GM13976 (cell line): ENCODE measurements at regions of chr20 and their contacts with region 1.

Region 1: GRCh38 chr20:48904365-48905296 is 16.9 kb upstream of the ARFGEF2 start:
- DNase-seq: peak; percentile 72
- CTCF ChIP-seq: peak; percentile 60

Region 2: GRCh38 chr20:48657475-48658470 is 246.9 kb before region 1 on chr20:
- in situ Hi-C with region 1: loop called (anchors 5 kb)
- DNase-seq: peak; percentile 94
- CTCF ChIP-seq: peak; percentile 88

Region 3: DNA sequence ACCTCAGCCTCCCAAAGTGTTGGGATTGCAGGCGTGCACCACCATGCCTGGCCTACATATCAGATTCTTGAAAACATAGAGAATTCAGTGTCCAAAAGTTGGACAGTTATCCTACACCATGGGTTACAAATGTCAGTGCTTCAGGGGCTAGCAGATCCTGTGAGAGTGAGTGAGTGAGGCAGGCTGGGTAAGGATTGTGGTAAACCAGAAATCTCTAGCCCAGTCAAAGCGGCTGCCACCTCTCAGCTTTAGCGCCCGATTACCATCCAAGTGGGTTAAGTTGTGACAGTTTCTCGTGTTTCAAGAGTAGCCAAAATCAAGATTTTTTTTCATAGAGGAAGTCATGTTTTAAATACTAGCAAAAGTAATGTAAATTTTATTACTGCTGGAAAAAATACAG is 119.6 kb after region 1 on chr20:
- in situ Hi-C with region 1: no loop called
- DNase-seq: no peak
- CTCF ChIP-seq: no peak

Region 4: DNA sequence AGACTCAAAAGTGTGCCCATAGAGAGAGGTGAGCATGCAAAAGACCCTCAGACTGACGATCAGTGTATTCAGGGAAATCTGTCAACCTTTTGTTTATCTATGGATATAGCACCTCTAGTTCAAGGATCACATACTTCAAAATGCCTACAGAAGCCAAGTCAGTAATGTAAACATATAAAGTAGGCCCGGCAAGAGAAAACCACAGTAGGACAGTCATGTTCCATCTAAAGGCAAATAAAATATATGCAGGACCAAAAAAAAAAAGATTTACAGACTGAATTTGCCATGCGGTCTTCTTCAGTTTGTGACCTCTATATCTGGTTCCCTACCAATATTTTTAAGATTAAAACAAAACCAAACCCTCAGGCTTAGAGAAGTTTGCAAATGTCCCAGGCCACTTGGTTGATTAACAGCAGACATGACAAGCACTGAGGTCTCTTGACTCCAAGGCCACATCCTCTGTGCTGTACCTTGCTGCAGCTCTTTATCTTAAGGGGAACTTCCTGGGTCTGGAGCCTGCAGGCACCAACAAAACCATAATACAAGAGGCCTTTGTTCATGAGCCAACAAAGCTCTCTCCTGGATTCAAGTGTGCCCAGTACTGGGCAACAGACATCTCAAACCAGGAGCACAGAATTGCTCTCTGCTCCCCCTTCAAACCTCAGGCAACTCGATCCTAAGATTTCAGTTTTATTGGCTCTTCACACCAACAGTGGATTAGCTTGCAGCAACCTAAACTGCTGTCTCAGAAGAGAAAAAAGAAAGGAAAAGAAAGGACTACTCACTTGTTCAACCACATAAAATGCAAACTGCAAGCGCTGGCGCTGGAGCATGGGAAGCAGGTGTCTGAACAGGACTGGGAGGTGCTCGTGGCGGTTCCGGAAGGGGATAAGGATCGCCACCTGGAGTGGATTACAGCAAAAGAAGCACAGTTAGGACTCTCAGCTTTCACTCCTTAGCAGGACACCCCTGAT is 737.3 kb after region 1 on chr20:
- in situ Hi-C with region 1: no loop called
- DNase-seq: no peak
- CTCF ChIP-seq: no peak